ENCODE measurements at regions of chr9 and their contacts with region 1.

Region 1: DNA sequence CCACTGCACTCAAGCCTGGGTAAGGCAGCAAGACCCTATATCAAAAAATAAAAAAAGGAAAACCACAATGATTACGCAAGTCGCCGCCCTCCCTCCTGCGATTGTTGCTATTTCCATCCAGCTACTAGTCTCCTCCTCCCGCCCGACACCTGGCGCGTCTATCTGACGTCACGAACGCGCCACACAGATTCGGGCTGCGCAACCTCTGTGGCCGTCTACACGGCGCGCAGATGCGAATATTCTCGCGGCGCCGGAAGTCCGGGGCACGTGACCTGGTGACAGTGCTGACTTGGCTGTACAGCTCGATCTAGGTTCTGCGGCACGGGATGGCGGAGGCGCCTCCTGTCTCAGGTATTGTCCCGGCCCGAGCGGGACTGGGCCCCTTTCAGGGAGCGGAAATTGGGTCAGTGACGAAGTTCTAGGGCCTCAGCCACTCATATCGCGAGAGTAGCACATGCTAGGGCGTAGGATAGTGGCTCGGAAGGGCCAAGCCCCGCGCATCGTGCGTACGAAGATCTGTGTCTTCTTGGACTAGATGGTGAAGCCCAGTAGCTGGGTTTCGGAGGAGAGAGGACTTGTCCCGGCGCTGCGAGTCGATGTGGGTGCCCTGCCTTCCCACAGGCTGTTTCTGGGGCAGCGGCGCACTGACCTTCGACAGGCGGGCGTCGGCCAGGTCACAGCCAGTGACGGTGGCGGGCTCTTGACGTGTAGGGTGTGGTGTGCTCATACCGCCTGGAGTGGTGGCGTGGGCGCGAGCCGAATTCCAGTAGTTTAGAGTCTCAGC is at the start of gene NFX1:
- DNase-seq: peak; percentile 92
- H3K4me3 ChIP-seq: peak within 1 kb of the TSS; percentile 97
- CTCF ChIP-seq: no peak

Region 2: DNA sequence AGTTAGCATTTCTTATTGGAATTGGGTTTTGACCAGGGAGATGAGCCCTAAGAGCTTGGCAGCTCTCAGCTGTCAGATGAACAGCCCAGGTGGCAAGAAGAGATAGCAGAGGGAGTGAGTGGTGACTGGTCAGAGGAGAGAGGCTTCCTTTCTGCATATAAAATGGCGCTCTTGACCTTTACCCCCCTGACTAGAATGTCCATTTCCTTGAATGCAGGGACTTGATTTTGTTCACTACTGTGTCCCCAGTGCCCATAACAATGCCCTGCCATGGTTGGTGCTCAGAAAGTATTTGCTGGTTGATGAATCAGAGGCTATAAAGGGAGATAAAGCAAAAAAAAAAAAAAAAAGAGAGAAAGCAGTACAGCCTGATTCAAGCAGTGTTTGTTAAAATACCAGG is 18.4 kb before region 1 on chr9:
- CTCF ChIA-PET with region 1: interaction called, 37 read pairs
- POLR2A ChIA-PET with region 1: no interaction called
- DNase-seq: no peak
- H3K4me3 ChIP-seq: no peak overlapping the region
- CTCF ChIP-seq: no peak

Region 3: GRCh38 chr9:33452828-33453271 is 162.4 kb after region 1 on chr9:
- CTCF ChIA-PET with region 1: interaction called, 41 read pairs
- POLR2A ChIA-PET with region 1: interaction called, 5 read pairs
- DNase-seq: peak; percentile 42
- H3K4me3 ChIP-seq: no peak overlapping the region
- CTCF ChIP-seq: peak; percentile 83

Region 4: DNA sequence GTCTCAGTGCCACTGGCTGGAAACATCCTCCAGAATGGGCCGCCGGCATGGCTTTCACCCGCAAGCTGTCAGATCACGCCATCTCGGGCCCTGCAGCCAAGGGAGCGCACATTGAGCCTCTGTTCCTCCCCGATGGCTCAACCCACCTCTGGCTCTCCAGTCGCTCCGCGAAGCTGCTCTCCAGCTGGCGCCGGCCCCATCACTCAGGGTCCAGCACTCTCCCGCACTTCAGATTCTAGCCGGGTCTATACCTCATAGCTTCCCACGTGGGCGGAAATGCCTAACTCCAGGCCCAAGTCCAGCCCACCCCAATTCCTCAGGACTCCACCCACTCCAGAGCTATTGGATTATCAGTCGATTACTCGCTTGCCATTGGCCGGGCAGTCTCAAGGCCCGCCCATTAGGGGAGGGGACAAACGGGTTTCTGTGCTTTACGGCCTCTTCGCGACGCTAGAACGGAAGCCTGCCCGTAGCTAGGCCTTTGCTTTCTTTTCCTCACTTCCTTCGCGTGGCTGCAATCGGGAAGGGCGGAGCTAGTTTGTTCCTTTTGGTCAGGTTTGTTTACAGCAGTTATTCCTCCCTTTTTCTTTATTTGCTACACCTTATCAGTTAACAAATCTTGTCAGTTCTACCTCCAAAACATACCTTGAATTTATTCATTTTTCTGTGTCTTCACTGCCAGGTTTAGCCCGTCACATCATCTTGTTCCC is 183.4 kb after region 1 on chr9 and contains the start of gene NOL6:
- CTCF ChIA-PET with region 1: interaction called, 13 read pairs
- POLR2A ChIA-PET with region 1: interaction called, 5 read pairs
- DNase-seq: peak; percentile 94
- H3K4me3 ChIP-seq: peak within 1 kb of the TSS; percentile 93
- CTCF ChIP-seq: no peak